ENCODE measurements at regions of chr14 and their contacts with region 1.

Region 1: DNA sequence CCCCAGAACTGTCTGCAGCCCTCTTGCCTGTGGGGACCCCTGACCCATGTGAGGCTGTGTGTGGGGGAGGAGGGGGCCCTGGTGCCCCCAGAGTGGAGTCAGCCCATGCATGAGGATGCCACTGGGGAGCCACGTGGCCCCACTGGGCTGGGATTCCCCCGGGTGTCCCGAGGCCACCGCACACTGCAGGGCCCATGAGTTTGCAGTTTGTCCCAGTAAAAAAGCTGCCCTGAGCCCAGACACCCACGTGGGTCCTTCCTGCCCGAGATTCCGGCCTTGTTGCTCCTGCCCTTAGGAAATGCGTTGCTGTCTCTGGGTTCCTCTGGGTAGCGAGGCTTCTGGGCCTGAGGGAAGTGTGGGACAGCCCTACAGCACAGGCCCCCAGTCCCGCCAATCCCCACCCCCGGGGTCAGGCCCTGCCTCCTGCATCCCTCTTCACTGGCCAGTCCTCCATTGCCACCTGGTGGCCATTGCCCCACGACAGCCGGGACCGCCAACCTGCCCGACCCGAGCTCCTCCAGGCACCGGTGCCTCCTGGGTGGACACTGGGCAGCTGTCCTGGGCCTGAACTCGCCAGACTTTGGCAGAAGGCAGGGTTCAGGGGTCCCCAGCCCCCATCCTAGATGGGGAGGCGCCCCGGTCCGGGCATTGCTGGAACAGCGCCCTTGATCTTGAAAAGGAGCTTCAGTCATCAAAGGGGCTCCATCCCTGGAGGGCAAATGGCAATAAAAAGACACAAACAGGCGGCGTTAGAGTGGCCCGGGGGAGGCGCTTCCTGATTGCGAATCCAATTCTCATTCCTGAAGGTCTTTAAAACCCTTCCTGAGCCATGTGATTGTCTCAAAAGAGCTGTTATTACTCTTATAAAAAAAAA is 15.6 kb upstream of the C14orf180 start:
- DNase-seq: peak; percentile 2
- ATAC-seq: peak; percentile 88
- H3K4me3 ChIP-seq: no peak overlapping the region
- H3K27ac ChIP-seq: no peak overlapping the region
- H3K4me1 ChIP-seq: peaks cover 6% of the 10 kb centered on the region
- H3K27me3 ChIP-seq: no peaks in the 10 kb centered on the region
- CTCF ChIP-seq: peak; percentile 91

Region 2: GRCh38 chr14:104078031-104078455 is 485.9 kb before region 1 on chr14:
- CTCF ChIA-PET with region 1: interaction called, 3 read pairs
- POLR2A ChIA-PET with region 1: no interaction called
- in situ Hi-C with region 1: no loop called
- intact Hi-C with region 1: loop called (anchors 10 kb)
- DNase-seq: peak; percentile 81
- ATAC-seq: peak; percentile 96
- H3K4me3 ChIP-seq: no peak overlapping the region
- H3K27ac ChIP-seq: no peak overlapping the region
- H3K4me1 ChIP-seq: 0 out of 2 replicates have a peak, but pooled peaks cover 3% of the 10 kb centered on the region
- H3K27me3 ChIP-seq: no peaks in the 10 kb centered on the region
- CTCF ChIP-seq: peak; percentile 99

Region 3: GRCh38 chr14:104137297-104138097 is 426.5 kb before region 1 on chr14:
- CTCF ChIA-PET with region 1: interaction called, 5 read pairs
- POLR2A ChIA-PET with region 1: no interaction called
- in situ Hi-C with region 1: no loop called
- intact Hi-C with region 1: loop called (anchors 2 kb)
- DNase-seq: no peak
- ATAC-seq: peak; percentile 85
- H3K4me3 ChIP-seq: peak overlapping the region; percentile 46 to 53
- H3K27ac ChIP-seq: no peak overlapping the region
- H3K4me1 ChIP-seq: no peaks in the 10 kb centered on the region; the same call in 1 of the 2 replicates
- H3K27me3 ChIP-seq: no peaks in the 10 kb centered on the region; the same call in 1 of the 2 replicates
- CTCF ChIP-seq: peak; percentile 92

Region 4: GRCh38 chr14:104356020-104356737 is 207.8 kb before region 1 on chr14:
- CTCF ChIA-PET with region 1: interaction called, 16 read pairs
- POLR2A ChIA-PET with region 1: no interaction called
- in situ Hi-C with region 1: no loop called
- intact Hi-C with region 1: no loop called
- DNase-seq: no peak
- ATAC-seq: no peak; the same call in 1 of the 2 replicates
- H3K4me3 ChIP-seq: no peak overlapping the region
- H3K27ac ChIP-seq: no peak overlapping the region
- H3K4me1 ChIP-seq: no peaks in the 10 kb centered on the region
- H3K27me3 ChIP-seq: no peaks in the 10 kb centered on the region
- CTCF ChIP-seq: no peak

Region 5: GRCh38 chr14:104494483-104494882 is 69.5 kb before region 1 on chr14:
- CTCF ChIA-PET with region 1: no interaction called
- POLR2A ChIA-PET with region 1: no interaction called
- in situ Hi-C with region 1: no loop called
- intact Hi-C with region 1: no loop called
- DNase-seq: no peak
- ATAC-seq: no peak
- H3K4me3 ChIP-seq: no peak overlapping the region
- H3K27ac ChIP-seq: no peak overlapping the region
- H3K4me1 ChIP-seq: no peaks in the 10 kb centered on the region
- H3K27me3 ChIP-seq: no peaks in the 10 kb centered on the region
- CTCF ChIP-seq: no peak

Region 6: DNA sequence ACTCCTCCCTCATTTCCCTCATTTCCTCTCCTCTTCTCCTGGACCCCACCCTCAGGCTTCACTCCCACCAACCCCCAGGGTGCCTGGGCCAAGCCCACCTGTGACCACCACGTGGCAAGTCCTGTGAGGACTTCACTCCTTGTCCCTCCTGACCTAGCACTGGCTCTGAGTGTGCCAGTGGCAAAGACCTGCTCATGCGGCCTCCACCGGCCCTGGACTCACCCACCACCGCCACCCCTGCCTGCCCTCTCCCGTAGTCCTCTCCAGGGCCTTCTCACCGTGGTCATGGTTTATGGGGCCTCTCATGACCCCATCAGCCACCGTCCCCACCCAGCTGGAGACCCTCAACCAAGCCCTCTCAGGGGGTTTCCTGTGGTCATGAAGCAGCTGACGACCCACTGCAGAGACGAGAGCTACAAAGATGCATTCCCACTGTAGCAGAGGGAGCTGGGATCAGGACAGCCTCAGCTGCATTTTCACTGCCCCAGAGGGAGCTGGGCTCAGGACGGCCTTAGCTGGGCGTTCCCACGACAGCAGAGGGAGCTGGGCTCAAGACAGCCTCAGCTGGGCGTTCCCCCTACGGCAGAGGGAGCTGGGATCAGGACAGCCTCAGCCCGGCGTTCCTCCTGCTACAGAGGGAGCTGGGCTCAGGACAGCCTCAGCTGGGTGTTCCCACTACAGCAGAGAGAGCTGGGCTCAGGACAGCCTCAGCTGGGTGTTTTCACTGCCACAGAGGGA is 12.4 kb after region 1 on chr14:
- CTCF ChIA-PET with region 1: no interaction called
- POLR2A ChIA-PET with region 1: no interaction called
- in situ Hi-C with region 1: no loop called
- intact Hi-C with region 1: no loop called
- DNase-seq: no peak
- ATAC-seq: peak; percentile 75
- H3K4me3 ChIP-seq: no peak overlapping the region
- H3K27ac ChIP-seq: no peak overlapping the region
- H3K4me1 ChIP-seq: no peaks in the 10 kb centered on the region
- H3K27me3 ChIP-seq: no peaks in the 10 kb centered on the region
- CTCF ChIP-seq: no peak

Region 7: DNA sequence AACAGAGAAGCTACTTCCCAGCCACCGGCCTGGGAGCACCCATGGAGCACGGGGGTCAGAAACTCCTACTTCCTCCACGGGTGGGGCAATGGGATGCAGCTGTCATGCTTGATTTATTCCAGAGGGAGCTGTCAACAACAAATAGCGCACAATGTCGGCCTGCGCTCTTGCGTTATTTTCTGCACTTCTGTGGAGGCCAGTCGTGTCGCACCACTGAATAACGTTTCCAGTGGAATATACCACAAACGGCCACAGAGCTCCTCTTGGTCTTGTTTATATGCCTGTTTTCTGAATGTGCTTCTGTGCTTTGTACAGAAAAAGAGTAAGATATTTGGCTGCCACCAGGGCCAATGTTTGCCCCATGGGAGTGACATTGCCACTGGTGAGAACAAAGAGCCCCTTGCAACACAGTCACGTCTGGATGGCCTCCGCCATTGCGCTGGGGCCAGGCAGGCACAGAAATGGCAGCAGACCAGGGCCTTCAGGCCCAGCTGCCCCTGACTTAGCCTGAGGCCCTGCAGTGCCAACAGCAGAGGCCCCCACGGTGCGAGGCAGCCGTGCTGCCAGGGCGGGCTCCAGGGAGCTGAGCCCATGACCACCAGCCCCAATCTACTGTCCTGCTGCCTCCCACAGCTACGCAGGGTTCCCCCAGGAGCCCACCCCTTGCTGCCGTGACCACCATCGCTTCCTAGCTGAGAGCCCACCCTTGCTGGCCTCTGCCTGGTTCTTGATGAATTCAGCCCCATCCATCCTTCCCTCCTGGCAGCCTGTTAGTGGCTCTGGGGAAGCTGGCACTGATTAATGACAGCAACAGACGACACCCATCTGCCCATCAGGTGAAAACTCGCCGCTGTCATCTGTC is 69.5 kb after region 1 on chr14:
- CTCF ChIA-PET with region 1: interaction called, 13 read pairs
- POLR2A ChIA-PET with region 1: no interaction called
- in situ Hi-C with region 1: no loop called
- intact Hi-C with region 1: no loop called
- DNase-seq: no peak
- ATAC-seq: no peak
- H3K4me3 ChIP-seq: no peak overlapping the region
- H3K27ac ChIP-seq: no peak overlapping the region
- H3K4me1 ChIP-seq: no peaks in the 10 kb centered on the region
- H3K27me3 ChIP-seq: no peaks in the 10 kb centered on the region; the same call in 1 of the 2 replicates
- CTCF ChIP-seq: no peak

Region 8: GRCh38 chr14:105005929-105006830 is 442.2 kb after region 1 on chr14:
- CTCF ChIA-PET with region 1: no interaction called
- POLR2A ChIA-PET with region 1: no interaction called
- in situ Hi-C with region 1: no loop called
- intact Hi-C with region 1: no loop called
- DNase-seq: no peak
- ATAC-seq: peak; percentile 52
- H3K4me3 ChIP-seq: no peak overlapping the region
- H3K27ac ChIP-seq: no peak overlapping the region
- H3K4me1 ChIP-seq: no peaks in the 10 kb centered on the region
- H3K27me3 ChIP-seq: no peaks in the 10 kb centered on the region
- CTCF ChIP-seq: no peak